ENCODE measurements at regions of chr7 and their contacts with region 1.

Region 1: GRCh38 chr7:83457022-83457892 is 191.7 kb downstream of the SEMA3E start:
- DNase-seq: no peak
- ATAC-seq: no peak; the same call in 1 of the 2 replicates
- H3K4me3 ChIP-seq: no peak overlapping the region
- H3K27ac ChIP-seq: no peak overlapping the region
- H3K4me1 ChIP-seq: no peaks in the 10 kb centered on the region
- H3K27me3 ChIP-seq: no peaks in the 10 kb centered on the region
- CTCF ChIP-seq: no peak
- POLR2A ChIP-seq: no peak
- RAD21 ChIP-seq: no peak

Region 2: DNA sequence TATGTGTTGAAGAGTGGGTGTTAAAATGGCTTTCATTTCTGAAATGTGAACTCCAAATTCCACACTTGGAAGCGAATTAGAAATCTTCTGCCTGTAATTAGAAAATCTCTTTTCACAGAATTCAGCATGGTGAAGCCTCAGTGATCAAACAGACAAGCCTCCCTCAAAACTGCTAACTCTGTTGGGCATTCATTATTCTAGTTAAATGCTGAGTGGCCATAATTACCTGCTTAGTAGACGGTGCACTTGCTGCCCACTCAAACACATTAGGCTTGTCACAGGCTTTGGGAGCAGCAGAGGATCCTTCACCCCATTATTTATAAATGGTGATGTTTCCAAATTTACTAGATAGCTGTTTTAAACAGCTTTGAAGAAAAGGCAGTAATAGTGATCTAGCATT is 117.3 kb before region 1 on chr7:
- CTCF ChIA-PET with region 1: no interaction called
- POLR2A ChIA-PET with region 1: no interaction called
- dilution Hi-C with region 1: no loop called
- in situ Hi-C with region 1: no loop called
- intact Hi-C with region 1: no loop called
- DNase-seq: no peak
- ATAC-seq: no peak
- H3K4me3 ChIP-seq: no peak overlapping the region
- H3K27ac ChIP-seq: no peak overlapping the region
- H3K4me1 ChIP-seq: no peaks in the 10 kb centered on the region
- H3K27me3 ChIP-seq: no peaks in the 10 kb centered on the region
- CTCF ChIP-seq: no peak
- POLR2A ChIP-seq: no peak
- RAD21 ChIP-seq: no peak

Region 3: GRCh38 chr7:83366629-83367028 is 90.6 kb before region 1 on chr7:
- CTCF ChIA-PET with region 1: no interaction called
- POLR2A ChIA-PET with region 1: no interaction called
- dilution Hi-C with region 1: no loop called
- in situ Hi-C with region 1: no loop called
- intact Hi-C with region 1: no loop called
- DNase-seq: no peak
- ATAC-seq: no peak
- H3K4me3 ChIP-seq: no peak overlapping the region
- H3K27ac ChIP-seq: no peak overlapping the region
- H3K4me1 ChIP-seq: no peaks in the 10 kb centered on the region
- H3K27me3 ChIP-seq: no peaks in the 10 kb centered on the region
- CTCF ChIP-seq: no peak
- POLR2A ChIP-seq: no peak
- RAD21 ChIP-seq: no peak

Region 4: GRCh38 chr7:83629117-83629880 is 172.0 kb after region 1 on chr7:
- CTCF ChIA-PET with region 1: no interaction called
- POLR2A ChIA-PET with region 1: interaction called, 12 read pairs
- dilution Hi-C with region 1: no loop called
- in situ Hi-C with region 1: no loop called
- intact Hi-C with region 1: no loop called
- DNase-seq: no peak
- ATAC-seq: no peak
- H3K4me3 ChIP-seq: no peak overlapping the region
- H3K27ac ChIP-seq: no peak overlapping the region
- H3K4me1 ChIP-seq: no peaks in the 10 kb centered on the region
- H3K27me3 ChIP-seq: no peaks in the 10 kb centered on the region
- CTCF ChIP-seq: no peak
- POLR2A ChIP-seq: no peak
- RAD21 ChIP-seq: no peak